Esophagus muscularis mucosa (tissue), 4 donors: ENCODE measurements at regions of chr17 and their contacts with region 1.

Region 1: GRCh38 chr17:31216053-31216751 is 80.8 kb downstream of the OMG start:
- DNase-seq: no peak
- H3K4me3 ChIP-seq: no peak overlapping the region
- H3K27ac ChIP-seq: peak overlapping the region in 1 of 4 donors; percentile 11
- H3K4me1 ChIP-seq: peaks cover 0 to 4% (median 2%) of the 10 kb centered on the region in 4 donors
- H3K27me3 ChIP-seq: no peaks in the 10 kb centered on the region
- CTCF ChIP-seq: peak; percentile 46 to 67 (median 63)
- EP300 ChIP-seq: no peak
- POLR2A ChIP-seq: no peak

Region 2: GRCh38 chr17:30906101-30906911 is 309.9 kb before region 1 on chr17 and contains the start of gene TEFM:
- intact Hi-C with region 1: loop called (anchors 5 kb)
- DNase-seq: peak; percentile 96
- H3K4me3 ChIP-seq: peak within 1 kb of the TSS; percentile 58 to 89 (median 80)
- H3K27ac ChIP-seq: peak within 1 kb of the TSS; percentile 83 to 91 (median 89)
- H3K4me1 ChIP-seq: peaks cover 14 to 31% (median 24%) of the 10 kb centered on the region in 4 donors
- H3K27me3 ChIP-seq: no peaks in the 10 kb centered on the region
- CTCF ChIP-seq: no peak
- EP300 ChIP-seq: no peak
- POLR2A ChIP-seq: no peak
- total RNA-seq, gene TEFM: 5.0 to 7.0 (median 6.6) TPM

Region 3: DNA sequence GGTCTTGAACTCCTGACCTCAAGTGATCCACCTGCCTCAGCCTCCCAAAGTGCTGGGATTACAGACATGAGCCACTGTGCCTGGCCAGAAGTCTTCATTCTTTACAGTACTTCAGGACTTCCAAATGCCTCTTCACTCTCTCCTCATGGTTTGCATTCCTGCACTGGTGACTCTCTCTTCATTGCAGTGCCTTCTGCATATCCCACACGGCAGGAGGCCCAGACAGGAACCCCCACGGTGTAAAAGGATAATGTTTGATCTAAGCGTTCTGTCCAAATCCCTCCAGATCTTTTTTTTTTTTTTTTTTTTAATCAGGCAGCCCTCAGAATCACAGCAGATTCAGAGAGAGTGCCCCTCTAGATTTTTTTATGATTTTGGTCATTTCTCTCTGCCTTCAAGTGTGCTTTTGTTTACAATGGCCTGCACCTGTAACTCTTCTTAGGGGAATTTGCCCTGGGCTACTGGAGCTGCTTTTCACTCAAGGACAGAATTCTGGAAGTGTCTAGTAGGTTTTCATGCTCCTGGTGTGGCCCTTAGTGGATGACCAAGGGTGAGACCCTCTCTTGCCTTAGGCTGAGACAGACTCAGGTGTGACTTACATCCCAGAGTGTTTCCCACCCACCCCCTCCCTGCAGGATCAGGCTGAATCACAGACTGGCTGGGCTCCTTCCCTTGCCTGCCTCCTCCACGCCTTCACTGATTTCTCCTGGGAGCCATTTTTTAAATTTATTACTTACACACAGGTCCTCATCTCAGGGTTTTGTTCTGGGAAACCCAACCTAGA is 141.2 kb before region 1 on chr17:
- intact Hi-C with region 1: no loop called
- DNase-seq: no peak
- H3K4me3 ChIP-seq: no peak overlapping the region
- H3K27ac ChIP-seq: no peak overlapping the region
- H3K4me1 ChIP-seq: no peaks in the 10 kb centered on the region
- H3K27me3 ChIP-seq: no peaks in the 10 kb centered on the region
- CTCF ChIP-seq: no peak
- EP300 ChIP-seq: no peak
- POLR2A ChIP-seq: no peak

Region 4: GRCh38 chr17:31248986-31249834 is 33.0 kb after region 1 on chr17:
- intact Hi-C with region 1: no loop called
- DNase-seq: no peak
- H3K4me3 ChIP-seq: no peak overlapping the region
- H3K27ac ChIP-seq: no peak overlapping the region
- H3K4me1 ChIP-seq: peaks cover 0 to 6% (median 2%) of the 10 kb centered on the region in 4 donors
- H3K27me3 ChIP-seq: no peaks in the 10 kb centered on the region
- CTCF ChIP-seq: no peak
- EP300 ChIP-seq: no peak
- POLR2A ChIP-seq: no peak